ENCODE measurements at regions of chr6 and their contacts with region 1.

Region 1: DNA sequence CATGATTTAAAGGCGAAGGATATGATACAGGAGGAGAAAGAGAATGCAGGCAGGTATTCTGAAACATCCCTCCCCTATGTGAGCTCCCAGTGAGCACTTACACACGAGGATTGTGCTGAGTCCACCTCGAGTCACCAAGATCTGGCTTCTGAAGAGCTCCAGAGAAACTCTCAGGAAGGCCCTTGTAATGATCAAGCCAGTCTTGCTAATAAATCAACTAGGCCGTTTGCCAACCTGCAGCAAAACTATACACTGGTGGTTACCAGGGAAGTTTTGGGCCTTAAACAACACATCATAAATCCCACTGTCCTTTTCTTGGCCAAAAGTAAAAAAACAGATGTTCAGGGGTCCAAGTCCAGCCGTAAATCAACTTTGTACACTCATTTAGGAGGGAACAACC is 79.2 kb downstream of the STXBP5 start:
- DNase-seq: no peak
- H3K4me3 Mint-ChIP-seq: no peak overlapping the region
- H3K27ac Mint-ChIP-seq: peak overlapping the region; percentile 55
- H3K4me1 Mint-ChIP-seq: peaks cover 46% of the 10 kb centered on the region
- H3K27me3 Mint-ChIP-seq: no peaks in the 10 kb centered on the region

Region 2: DNA sequence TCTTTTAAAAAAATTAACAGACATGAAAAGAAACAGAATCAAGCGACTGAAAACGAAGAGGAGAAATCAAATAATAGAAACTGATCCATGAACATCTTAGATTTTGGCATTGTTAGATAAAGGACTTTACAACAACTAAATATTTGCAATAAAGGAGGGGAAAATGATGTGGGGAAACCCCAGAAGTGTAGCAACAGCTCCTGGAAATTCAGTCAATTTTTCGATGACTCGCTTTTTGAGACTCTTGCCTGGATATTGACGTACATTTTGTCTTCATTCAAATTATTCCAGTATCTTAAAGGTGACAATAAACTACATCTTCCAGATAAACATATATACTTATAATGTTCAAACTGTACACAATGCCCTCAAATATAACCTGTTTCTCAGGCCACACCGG is 640.5 kb before region 1 on chr6:
- intact Hi-C with region 1: no loop called
- DNase-seq: no peak
- H3K4me3 Mint-ChIP-seq: no peak overlapping the region
- H3K27ac Mint-ChIP-seq: no peak overlapping the region
- H3K4me1 Mint-ChIP-seq: no peaks in the 10 kb centered on the region
- H3K27me3 Mint-ChIP-seq: no peaks in the 10 kb centered on the region

Region 3: GRCh38 chr6:146795479-146796133 is 487.9 kb before region 1 on chr6:
- intact Hi-C with region 1: loop called (anchors 5 kb)
- DNase-seq: no peak
- H3K4me3 Mint-ChIP-seq: no peak overlapping the region
- H3K27ac Mint-ChIP-seq: peak overlapping the region; percentile 10
- H3K4me1 Mint-ChIP-seq: peaks cover 14% of the 10 kb centered on the region
- H3K27me3 Mint-ChIP-seq: no peaks in the 10 kb centered on the region

Region 4: GRCh38 chr6:146876271-146877151 is 406.9 kb before region 1 on chr6:
- intact Hi-C with region 1: loop called (anchors 1 kb)
- DNase-seq: no peak
- H3K4me3 Mint-ChIP-seq: no peak overlapping the region
- H3K27ac Mint-ChIP-seq: peak overlapping the region; percentile 85
- H3K4me1 Mint-ChIP-seq: peaks cover 27% of the 10 kb centered on the region
- H3K27me3 Mint-ChIP-seq: no peaks in the 10 kb centered on the region

Region 5: GRCh38 chr6:147202516-147203312 is 80.7 kb before region 1 on chr6:
- intact Hi-C with region 1: loop called (anchors 1 kb)
- DNase-seq: peak; percentile 79
- H3K4me3 Mint-ChIP-seq: peak overlapping the region; percentile 93
- H3K27ac Mint-ChIP-seq: peak overlapping the region; percentile 99
- H3K4me1 Mint-ChIP-seq: peaks cover 29% of the 10 kb centered on the region
- H3K27me3 Mint-ChIP-seq: no peaks in the 10 kb centered on the region

Region 6: DNA sequence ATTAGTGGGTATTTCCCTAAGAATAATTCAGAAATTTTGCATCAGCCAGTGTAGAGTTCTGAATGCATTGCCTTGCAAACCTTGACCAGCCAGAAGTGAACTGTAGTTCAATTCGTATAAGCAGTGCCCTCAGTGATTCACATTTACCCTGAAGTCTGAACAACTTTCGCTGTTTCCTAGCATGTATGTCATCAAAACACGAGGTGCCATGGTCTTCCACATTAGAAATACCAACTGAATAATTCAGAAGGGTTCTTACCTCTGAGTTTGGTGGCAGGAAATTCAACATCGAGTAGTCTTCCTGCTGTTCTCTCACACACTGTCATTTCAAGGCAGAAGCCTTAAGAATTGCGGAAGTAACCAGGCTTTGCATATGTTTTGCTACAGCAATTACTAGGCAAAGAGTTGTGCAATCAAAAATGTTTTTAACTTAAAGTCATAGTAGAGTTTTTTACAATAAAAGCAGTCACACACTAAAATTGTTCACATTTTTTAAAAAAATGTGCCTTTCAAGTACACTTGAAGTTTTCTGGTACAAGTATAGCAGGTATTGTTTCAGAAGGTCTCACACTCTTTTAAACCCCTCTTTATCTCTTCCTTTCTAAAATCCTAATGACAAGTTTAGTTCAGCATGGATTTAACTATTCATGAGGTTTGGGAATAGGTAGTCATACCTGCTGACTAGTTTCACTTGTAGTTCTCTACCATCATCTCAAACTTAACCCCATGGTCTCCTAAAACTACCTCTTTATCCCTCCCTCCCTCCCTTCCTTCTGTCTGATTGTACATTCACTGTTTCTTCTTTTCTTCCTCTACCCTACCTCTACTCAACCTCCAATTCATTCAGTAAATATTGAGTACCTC is 39.1 kb after region 1 on chr6:
- intact Hi-C with region 1: loop called (anchors 1 kb)
- DNase-seq: peak; percentile 11
- H3K4me3 Mint-ChIP-seq: peak overlapping the region; percentile 55
- H3K27ac Mint-ChIP-seq: peak overlapping the region; percentile 79
- H3K4me1 Mint-ChIP-seq: peaks cover 18% of the 10 kb centered on the region
- H3K27me3 Mint-ChIP-seq: no peaks in the 10 kb centered on the region